Activated CD8-positive, alpha-beta T cell treated with anti-CD3 and anti-CD28 coated beads for 36 hours (primary cell): ENCODE measurements at regions of chr5 and their contacts with region 1.

Region 1: GRCh38 chr5:115544436-115545350 is at the start of gene FEM1C:
- DNase-seq: peak; percentile 99
- ATAC-seq: peak; percentile 95
- H3K4me3 Mint-ChIP-seq: peak within 1 kb of the TSS; percentile 96
- H3K27ac Mint-ChIP-seq: peak within 1 kb of the TSS; percentile 99
- H3K4me1 Mint-ChIP-seq: peaks cover 39% of the 10 kb centered on the region
- H3K27me3 Mint-ChIP-seq: no peaks in the 10 kb centered on the region
- CTCF ChIP-seq: no peak
- total RNA-seq, gene FEM1C: 16.6 to 16.7 TPM

Region 2: GRCh38 chr5:115274584-115274983 is 270.1 kb before region 1 on chr5:
- CTCF ChIA-PET with region 1: no interaction called
- POLR2A ChIA-PET with region 1: no interaction called
- intact Hi-C with region 1: no loop called
- DNase-seq: no peak
- ATAC-seq: no peak
- H3K4me3 Mint-ChIP-seq: no peak overlapping the region
- H3K27ac Mint-ChIP-seq: no peak overlapping the region
- H3K4me1 Mint-ChIP-seq: no peaks in the 10 kb centered on the region
- H3K27me3 Mint-ChIP-seq: no peaks in the 10 kb centered on the region
- CTCF ChIP-seq: no peak

Region 3: GRCh38 chr5:115460472-115460871 is 84.2 kb before region 1 on chr5:
- CTCF ChIA-PET with region 1: no interaction called
- POLR2A ChIA-PET with region 1: interaction called, 8 read pairs
- intact Hi-C with region 1: loop called (anchors 5 kb)
- DNase-seq: peak; percentile 31
- ATAC-seq: peak; percentile 71
- H3K4me3 Mint-ChIP-seq: no peak overlapping the region
- H3K27ac Mint-ChIP-seq: no peak overlapping the region
- H3K4me1 Mint-ChIP-seq: peaks cover 4% of the 10 kb centered on the region
- H3K27me3 Mint-ChIP-seq: peaks cover 22% of the 10 kb centered on the region
- CTCF ChIP-seq: no peak

Region 4: DNA sequence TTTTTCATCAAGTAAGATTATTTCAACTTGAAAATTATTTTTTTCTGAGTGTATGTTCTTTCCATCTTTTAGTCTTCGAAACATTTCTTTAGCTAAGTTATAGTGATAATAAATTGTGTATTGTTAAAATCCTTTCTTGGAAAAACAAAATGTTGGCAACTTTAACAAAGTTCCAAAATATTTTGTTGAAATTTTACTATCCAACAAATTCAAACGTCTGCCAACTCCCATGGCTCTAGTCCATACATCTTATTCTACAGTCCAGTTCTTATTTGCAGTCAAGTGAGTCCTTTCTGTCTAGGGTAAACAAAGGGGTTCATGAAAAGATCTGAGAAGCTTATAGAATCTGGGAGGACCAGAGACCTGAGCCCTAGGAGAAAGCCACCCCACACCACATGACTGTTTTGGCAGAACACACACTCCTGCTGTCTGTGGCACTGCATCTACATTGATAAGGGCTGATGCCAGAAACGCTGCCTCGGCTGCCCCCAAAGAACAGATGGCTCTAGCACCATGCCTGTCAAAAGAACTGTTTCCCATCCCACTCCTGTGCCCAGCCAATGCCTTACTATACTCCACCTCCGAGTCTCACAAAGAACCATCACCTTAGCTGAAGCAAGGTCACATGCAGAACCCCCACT is 47.6 kb before region 1 on chr5:
- CTCF ChIA-PET with region 1: no interaction called
- POLR2A ChIA-PET with region 1: no interaction called
- intact Hi-C with region 1: no loop called
- DNase-seq: no peak
- ATAC-seq: no peak
- H3K4me3 Mint-ChIP-seq: no peak overlapping the region
- H3K27ac Mint-ChIP-seq: no peak overlapping the region
- H3K4me1 Mint-ChIP-seq: no peaks in the 10 kb centered on the region
- H3K27me3 Mint-ChIP-seq: peaks cover 33% of the 10 kb centered on the region
- CTCF ChIP-seq: no peak

Region 5: GRCh38 chr5:115579747-115580173 is 35.1 kb after region 1 on chr5:
- CTCF ChIA-PET with region 1: interaction called, 14 read pairs
- POLR2A ChIA-PET with region 1: interaction called, 5 read pairs
- intact Hi-C with region 1: no loop called
- DNase-seq: no peak
- ATAC-seq: no peak
- H3K4me3 Mint-ChIP-seq: no peak overlapping the region
- H3K27ac Mint-ChIP-seq: no peak overlapping the region
- H3K4me1 Mint-ChIP-seq: no peaks in the 10 kb centered on the region
- H3K27me3 Mint-ChIP-seq: no peaks in the 10 kb centered on the region
- CTCF ChIP-seq: no peak

Region 6: DNA sequence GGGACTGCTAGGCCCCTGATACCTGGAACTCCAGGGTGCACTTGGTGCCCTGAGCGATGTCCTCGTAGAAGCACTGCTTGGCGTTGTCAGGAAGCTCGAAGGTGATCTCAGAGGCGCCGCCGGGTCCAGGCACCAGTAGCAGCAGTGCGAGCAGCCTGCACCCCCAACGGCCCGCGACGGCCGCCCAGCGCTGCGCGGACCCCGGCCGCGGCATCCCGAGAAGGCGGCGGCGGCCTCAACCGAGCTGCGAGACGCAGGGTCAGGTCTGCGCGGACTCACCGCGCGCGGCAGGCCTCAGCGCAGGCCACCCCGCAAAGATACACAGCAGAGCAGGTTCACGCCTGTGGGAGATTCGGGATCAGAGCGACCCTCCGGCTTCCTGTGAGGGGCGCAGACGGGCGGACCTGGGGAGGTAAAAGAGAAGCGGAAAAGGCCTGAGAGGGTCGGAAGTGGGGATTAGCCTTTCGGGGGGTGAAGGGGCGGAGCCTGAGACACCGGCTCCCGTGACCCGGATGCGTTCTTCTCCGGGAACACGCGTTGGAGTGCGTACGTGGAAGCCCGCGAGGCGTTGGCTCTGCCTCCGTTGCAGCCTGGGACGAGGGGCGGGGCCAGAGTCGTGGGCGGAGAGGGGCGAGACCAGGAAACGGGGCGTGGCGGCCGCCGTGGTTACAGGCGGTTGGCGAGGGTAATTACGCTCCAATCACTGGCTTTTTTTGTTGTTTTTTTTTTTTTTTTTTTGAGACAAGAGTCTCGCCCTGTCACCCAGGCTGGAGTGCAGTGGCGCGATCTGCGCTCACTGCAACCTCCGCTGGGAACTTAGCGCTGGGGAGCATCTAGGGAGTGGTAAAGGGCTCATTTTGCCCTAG is 81.1 kb after region 1 on chr5 and contains the start of gene TMED7:
- CTCF ChIA-PET with region 1: interaction called, 4 read pairs
- POLR2A ChIA-PET with region 1: interaction called, 3 read pairs
- intact Hi-C with region 1: loop called (anchors 5 kb)
- DNase-seq: peak; percentile 100
- ATAC-seq: peak; percentile 93
- H3K4me3 Mint-ChIP-seq: no peak within 1 kb of the TSS
- H3K27ac Mint-ChIP-seq: peak within 1 kb of the TSS; percentile 90
- H3K4me1 Mint-ChIP-seq: peaks cover 25% of the 10 kb centered on the region
- H3K27me3 Mint-ChIP-seq: no peaks in the 10 kb centered on the region
- CTCF ChIP-seq: no peak
- total RNA-seq, gene TMED7: 39.9 to 44.6 TPM